Gastrocnemius medialis (tissue), 4 donors: ENCODE measurements at regions of chr5 and their contacts with region 1.

Region 1: DNA sequence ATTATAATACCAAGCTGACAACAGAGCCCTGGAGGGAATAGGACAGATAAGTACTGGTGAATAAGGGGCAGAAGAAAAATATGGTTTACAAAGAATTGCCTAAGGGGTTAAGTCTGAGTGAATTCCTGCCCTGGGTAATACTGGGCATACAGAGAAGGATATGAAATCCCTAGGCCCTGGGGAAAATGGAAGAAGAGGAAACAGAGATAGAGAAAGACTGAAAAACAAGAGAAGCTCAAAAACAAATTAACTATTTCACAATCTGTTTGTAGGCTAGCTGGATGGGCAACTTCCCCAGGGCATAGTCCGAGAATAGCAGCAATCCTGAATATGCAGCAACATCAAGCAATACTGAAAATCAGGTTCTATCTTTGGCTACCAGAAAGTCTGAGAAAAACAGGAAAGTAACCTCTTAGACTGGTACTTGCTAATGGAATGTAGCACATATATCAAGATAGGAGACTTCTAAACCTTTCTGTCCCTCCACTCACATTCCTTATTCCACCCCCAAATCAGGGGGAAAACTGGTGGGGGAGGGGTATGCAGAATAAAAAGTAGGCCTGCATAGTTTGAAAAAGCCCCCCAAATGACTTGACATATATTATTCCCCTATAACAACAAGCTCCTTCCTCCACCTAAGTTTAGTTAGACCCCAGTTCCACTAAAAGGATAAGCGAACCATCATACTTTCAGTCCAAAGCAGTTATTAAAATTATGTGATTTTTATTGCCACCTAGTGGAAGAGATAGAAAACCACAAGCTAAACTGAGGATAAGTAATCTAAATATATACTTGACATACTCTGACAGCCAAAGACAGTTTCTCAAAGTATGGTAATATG is 20.6 kb downstream of the SLC38A9 start:
- DNase-seq: peak in 1 of 2 donors; percentile 7
- ATAC-seq: peak; percentile 86 to 87
- H3K4me3 ChIP-seq: peak overlapping the region in 3 of 4 donors; percentile 11 to 39 (median 12)
- H3K27ac ChIP-seq: peak overlapping the region; percentile 2 to 37 (median 17)
- H3K4me1 ChIP-seq: peaks cover 17 to 20% of the 10 kb centered on the region in 2 donors
- H3K27me3 ChIP-seq: no peaks in the 10 kb centered on the region
- CTCF ChIP-seq: peak; percentile 63 to 89 (median 69)
- POLR2A ChIP-seq: no peak

Region 2: DNA sequence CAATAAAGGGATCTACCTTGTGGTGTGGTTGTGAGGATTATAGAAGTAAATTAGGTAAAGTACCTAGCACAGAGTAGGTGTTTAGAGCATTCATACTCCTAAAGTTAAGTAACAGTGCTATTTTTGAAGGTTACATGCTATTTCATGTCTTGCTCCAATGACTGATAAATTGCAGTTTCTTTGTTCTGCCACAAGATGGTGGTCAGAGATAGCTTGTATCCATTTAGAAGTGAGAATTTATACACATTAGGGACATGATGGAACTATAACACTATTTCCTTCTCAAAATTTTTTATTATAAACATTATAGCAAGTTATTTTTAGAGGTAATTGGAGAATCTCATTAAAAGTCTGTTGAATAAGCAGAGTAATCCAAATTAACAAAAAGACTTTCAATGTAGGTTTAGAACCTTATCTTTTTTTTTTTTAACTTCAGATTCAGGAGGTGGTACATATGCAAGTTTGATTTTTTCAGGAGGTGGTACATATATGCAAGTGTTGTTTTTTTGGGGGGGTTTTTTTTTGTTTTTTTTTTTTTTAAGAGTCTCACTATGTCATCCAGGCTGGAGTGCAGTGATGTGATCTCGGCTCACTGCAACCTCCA is 366.6 kb before region 1 on chr5:
- in situ Hi-C with region 1: loop called in 2 of 4 experiments (anchors 25 kb)
- intact Hi-C with region 1: loop called (anchors 5 kb)
- DNase-seq: no peak
- ATAC-seq: peak; percentile 54 to 79
- H3K4me3 ChIP-seq: no peak overlapping the region
- H3K27ac ChIP-seq: peak overlapping the region in 1 of 4 donors; percentile 20
- H3K4me1 ChIP-seq: peaks cover 8 to 29% of the 10 kb centered on the region in 2 donors
- H3K27me3 ChIP-seq: no peaks in the 10 kb centered on the region
- CTCF ChIP-seq: peak; percentile 27 to 78 (median 45)
- POLR2A ChIP-seq: no peak

Region 3: GRCh38 chr5:55344392-55344992 is 347.0 kb before region 1 on chr5:
- in situ Hi-C with region 1: loop called (anchors 5 to 25 kb)
- intact Hi-C with region 1: loop called (anchors 1 kb)
- DNase-seq: peak in 1 of 2 donors; percentile 25
- ATAC-seq: peak in 1 of 2 donors; percentile 53
- H3K4me3 ChIP-seq: no peak overlapping the region
- H3K27ac ChIP-seq: peak overlapping the region in 1 of 4 donors; percentile 21
- H3K4me1 ChIP-seq: no peaks in the 10 kb centered on the region
- H3K27me3 ChIP-seq: no peaks in the 10 kb centered on the region
- CTCF ChIP-seq: peak; percentile 66 to 85 (median 70)
- POLR2A ChIP-seq: no peak

Region 4: DNA sequence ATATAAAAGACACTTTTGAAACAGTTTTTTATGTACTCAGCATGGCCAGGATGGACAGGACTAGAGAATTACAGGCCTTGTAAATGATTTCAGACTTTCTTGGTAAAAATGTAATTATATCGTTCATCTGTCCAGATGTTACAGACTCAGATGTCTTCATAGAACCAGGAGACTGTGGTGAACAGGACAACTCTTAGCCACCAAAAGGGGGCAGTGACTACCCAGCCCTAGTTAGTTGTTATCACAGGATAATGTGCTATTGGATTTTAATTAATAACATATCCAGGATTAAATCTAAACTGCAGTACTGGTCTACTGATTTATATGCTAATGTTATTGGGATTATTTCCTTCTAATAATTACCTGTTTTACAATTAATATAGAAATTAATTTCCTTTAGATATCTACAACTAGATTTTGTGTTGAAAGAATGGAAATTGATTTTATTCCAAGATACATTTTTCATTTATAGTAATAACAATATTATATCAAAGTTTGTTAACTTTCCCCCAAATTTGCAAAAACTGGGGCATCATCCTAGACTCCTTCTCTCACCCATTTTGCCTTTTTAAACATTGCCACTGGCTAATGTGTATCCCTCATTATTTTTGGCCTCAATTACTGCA is 284.3 kb before region 1 on chr5:
- in situ Hi-C with region 1: loop called (anchors 5 to 10 kb)
- intact Hi-C with region 1: loop called (anchors 1 kb)
- DNase-seq: no peak
- ATAC-seq: peak; percentile 62
- H3K4me3 ChIP-seq: no peak overlapping the region
- H3K27ac ChIP-seq: no peak overlapping the region
- H3K4me1 ChIP-seq: no peaks in the 10 kb centered on the region
- H3K27me3 ChIP-seq: no peaks in the 10 kb centered on the region
- CTCF ChIP-seq: peak in 4 of 5 experiments; percentile 39 to 80 (median 62)
- POLR2A ChIP-seq: no peak

Region 5: DNA sequence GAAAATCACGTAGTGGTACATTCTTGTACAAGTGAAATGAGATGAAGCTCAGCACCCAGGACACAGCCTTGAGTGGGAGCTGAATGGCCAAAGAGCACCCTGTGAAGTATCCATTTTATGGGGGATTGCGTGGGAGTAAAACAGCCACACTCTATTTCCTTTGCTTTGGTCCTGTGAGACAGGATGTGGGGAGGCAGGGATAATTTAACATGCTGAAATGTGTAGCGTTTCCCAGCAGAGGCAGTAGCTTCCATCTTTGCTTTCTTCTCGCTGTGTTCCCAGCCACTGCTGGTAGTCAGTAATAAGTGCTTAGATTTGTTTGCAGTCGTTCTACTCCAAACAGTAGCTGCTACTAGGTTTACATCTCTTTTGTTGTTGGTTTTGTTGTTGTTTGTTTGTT is 164.0 kb after region 1 on chr5:
- in situ Hi-C with region 1: no loop called
- intact Hi-C with region 1: no loop called
- DNase-seq: no peak
- ATAC-seq: no peak
- H3K4me3 ChIP-seq: no peak overlapping the region
- H3K27ac ChIP-seq: no peak overlapping the region
- H3K4me1 ChIP-seq: no peaks in the 10 kb centered on the region
- H3K27me3 ChIP-seq: no peaks in the 10 kb centered on the region
- CTCF ChIP-seq: no peak
- POLR2A ChIP-seq: no peak